HEK293 (cell line): ENCODE measurements at regions of chrX and their contacts with region 1.

Region 1: GRCh38 chrX:12771445-12772069 is 19.7 kb upstream of the PRPS2 start:
- H3K4me3 ChIP-seq: no peak overlapping the region
- H3K27ac ChIP-seq: no peak overlapping the region
- H3K4me1 ChIP-seq: no peaks in the 10 kb centered on the region
- CTCF ChIP-seq: peak; percentile 88

Region 2: GRCh38 chrX:12685541-12685940 is 86.0 kb before region 1 on chrX:
- CTCF ChIA-PET with region 1: no interaction called
- POLR2A ChIA-PET with region 1: no interaction called
- H3K4me3 ChIP-seq: no peak overlapping the region
- H3K27ac ChIP-seq: no peak overlapping the region
- H3K4me1 ChIP-seq: no peaks in the 10 kb centered on the region
- CTCF ChIP-seq: no peak

Region 3: DNA sequence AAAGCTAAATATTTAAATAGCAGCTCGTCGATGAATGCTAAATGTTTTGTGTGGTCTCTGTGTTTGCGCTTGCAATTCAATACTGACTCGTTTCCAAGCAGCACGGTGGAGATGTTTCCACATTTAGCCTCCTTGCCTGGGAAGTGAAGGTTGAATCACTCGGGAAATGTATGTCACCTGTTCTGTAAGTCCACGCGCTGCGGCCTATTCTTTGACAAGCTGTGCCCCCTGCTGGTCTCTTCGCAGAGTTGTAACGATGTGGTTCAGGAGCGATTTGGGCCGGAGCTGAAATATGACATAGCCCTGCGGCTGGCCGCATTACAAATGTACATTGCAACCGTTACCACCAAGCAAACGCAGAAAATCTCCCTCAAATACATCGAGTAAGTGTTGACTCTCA is 69.9 kb before region 1 on chrX:
- CTCF ChIA-PET with region 1: interaction called, 17 read pairs
- POLR2A ChIA-PET with region 1: no interaction called
- H3K4me3 ChIP-seq: no peak overlapping the region
- H3K27ac ChIP-seq: no peak overlapping the region
- H3K4me1 ChIP-seq: no peaks in the 10 kb centered on the region
- CTCF ChIP-seq: 0 out of 2 replicates have a peak, but pooled peaks have one; percentile 7

Region 4: DNA sequence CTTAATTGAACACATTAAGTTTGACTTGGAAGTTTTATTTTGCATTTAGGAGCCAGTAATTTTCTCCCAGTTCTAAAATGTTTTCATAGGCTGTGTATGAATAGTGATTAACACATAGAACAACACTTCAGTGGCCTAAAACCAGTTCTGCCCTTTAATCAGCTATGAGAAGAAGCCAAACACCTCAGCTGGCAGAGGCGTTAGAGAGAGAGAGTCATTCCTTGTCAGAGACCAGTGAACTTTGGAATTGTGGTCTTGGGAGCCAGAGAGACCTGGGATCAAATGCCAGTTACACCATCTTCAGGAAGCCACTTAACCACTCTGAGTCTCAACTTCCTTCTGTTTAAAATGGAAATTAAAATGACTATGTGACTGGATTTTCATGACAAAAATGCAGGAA is 19.7 kb before region 1 on chrX:
- CTCF ChIA-PET with region 1: interaction called, 39 read pairs
- POLR2A ChIA-PET with region 1: interaction called, 3 read pairs
- H3K4me3 ChIP-seq: no peak overlapping the region
- H3K27ac ChIP-seq: no peak overlapping the region
- H3K4me1 ChIP-seq: no peaks in the 10 kb centered on the region
- CTCF ChIP-seq: no peak

Region 5: DNA sequence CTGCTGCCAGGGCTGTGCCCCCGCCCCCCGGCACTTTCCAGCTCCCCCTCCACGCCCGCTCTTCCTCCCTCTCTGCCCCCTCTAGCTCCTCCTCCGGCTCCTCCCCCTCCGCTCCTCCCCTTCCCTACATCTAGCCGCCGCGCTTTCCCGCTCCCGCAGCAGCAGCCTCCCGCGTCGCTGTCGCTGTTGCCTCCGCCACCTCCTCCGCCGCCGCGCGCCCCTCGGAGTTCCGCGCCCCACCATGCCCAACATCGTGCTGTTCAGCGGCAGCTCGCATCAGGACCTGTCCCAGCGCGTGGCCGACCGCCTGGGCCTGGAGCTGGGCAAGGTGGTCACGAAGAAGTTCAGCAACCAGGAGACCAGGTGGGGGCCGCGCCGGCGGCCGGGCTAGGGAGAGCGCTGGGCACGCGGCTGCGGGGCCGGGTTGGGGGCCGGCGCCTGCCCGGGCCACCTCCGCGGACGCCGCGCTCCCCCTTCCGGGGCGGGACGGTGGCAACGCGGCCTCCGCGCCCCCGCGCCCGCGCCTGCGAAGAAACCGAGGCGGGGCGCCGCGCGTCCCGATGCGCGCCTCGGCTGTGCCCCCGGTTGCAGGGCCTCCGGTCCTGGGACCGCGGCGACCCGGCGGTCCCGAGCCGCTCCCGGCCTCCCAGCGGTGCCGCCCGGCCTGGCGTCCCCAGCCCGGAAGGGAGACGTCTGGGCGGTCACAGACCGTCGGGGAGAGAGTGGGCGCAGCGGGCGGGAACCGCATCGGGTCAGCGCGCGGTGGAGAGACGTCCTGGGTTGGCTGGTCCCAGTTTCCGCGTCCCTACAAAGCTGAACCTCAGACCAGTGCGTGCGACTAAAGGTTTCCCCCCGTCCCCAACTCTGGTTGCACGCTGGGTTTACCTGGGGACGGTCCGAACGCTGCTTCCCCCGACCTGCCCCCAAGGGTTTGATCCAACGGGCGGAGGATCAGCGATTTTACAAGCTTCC is 20.0 kb after region 1 on chrX and contains the start of gene PRPS2:
- CTCF ChIA-PET with region 1: interaction called, 29 read pairs
- POLR2A ChIA-PET with region 1: interaction called, 15 read pairs
- H3K4me3 ChIP-seq: peak within 1 kb of the TSS; percentile 77
- H3K27ac ChIP-seq: peak within 1 kb of the TSS; percentile 72; the same call in 1 of the 2 replicates
- H3K4me1 ChIP-seq: no peaks in the 10 kb centered on the region
- CTCF ChIP-seq: peak; percentile 32; the same call in 1 of the 2 replicates

Region 6: GRCh38 chrX:12865359-12865758 is 93.8 kb after region 1 on chrX:
- CTCF ChIA-PET with region 1: no interaction called
- POLR2A ChIA-PET with region 1: no interaction called
- H3K4me3 ChIP-seq: no peak overlapping the region
- H3K27ac ChIP-seq: no peak overlapping the region
- H3K4me1 ChIP-seq: no peaks in the 10 kb centered on the region
- CTCF ChIP-seq: no peak

Region 7: DNA sequence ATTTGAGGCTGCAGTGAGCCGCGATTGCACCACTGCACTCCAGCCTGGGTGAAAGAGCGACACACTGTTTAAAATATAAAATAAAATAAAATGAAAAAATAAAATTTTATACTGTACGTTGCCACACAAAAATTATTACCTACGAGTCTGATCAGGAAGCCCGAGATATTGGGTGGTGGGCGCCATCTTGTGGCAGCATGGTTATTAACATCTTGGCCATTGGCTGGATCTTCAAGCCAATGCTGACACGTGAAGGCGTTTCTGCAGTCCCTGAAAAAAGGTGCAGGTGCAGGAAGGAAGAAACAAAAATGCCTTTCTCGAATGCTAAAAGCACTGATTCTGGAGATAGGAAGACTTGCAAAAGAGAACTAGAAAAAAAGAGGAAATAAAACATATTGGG is 129.9 kb after region 1 on chrX:
- CTCF ChIA-PET with region 1: interaction called, 10 read pairs
- POLR2A ChIA-PET with region 1: no interaction called
- H3K4me3 ChIP-seq: no peak overlapping the region
- H3K27ac ChIP-seq: no peak overlapping the region
- H3K4me1 ChIP-seq: no peaks in the 10 kb centered on the region
- CTCF ChIP-seq: peak; percentile 51